Activated naive CD4-positive, alpha-beta T cell treated with anti-CD3 and anti-CD28 coated beads for 36 hours (primary cell): ENCODE measurements at regions of chr3 and their contacts with region 1.

Region 1: DNA sequence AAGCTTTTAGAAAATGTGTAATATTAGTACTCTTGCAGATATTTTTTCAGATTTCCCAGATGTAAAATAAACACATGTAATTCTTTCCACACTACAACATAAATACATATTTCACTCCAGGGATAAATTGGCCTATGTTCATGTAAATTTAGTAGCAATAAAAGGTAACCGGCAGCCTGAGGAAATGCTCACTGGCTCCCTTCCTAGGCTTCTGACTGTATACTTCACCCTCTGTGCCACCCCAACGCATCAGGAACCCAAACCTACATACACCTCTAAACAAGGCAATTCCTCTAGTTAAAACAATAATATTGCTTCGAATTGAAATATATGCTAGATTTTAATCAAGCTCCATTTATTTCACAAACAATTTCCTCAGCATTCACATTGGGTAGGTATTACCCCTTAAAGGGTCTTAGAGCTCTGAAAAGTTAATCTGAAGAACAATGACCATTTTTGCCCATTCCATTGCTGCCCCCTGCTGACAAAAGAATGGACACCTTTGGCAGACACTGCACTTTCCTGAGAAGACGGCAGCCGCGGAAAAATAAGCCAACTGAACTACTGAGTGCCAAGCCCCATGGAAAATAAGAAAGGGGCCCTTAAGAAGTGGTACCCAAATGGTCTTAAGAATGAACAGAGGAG is 212.5 kb downstream of the OSBPL10 start:
- DNase-seq: peak; percentile 84
- H3K4me3 Mint-ChIP-seq: no peak overlapping the region
- H3K27ac Mint-ChIP-seq: no peak overlapping the region
- H3K4me1 Mint-ChIP-seq: peaks cover 32% of the 10 kb centered on the region
- H3K27me3 Mint-ChIP-seq: no peaks in the 10 kb centered on the region

Region 2: GRCh38 chr3:31132132-31132769 is 636.4 kb before region 1 on chr3:
- CTCF ChIA-PET with region 1: interaction called, 4 read pairs
- intact Hi-C with region 1: loop called (anchors 2 kb)
- DNase-seq: no peak
- H3K4me3 Mint-ChIP-seq: no peak overlapping the region
- H3K27ac Mint-ChIP-seq: no peak overlapping the region
- H3K4me1 Mint-ChIP-seq: no peaks in the 10 kb centered on the region
- H3K27me3 Mint-ChIP-seq: no peaks in the 10 kb centered on the region

Region 3: GRCh38 chr3:31550452-31551251 is 217.9 kb before region 1 on chr3:
- CTCF ChIA-PET with region 1: interaction called, 3 read pairs
- intact Hi-C with region 1: loop called (anchors 1 kb)
- DNase-seq: peak; percentile 32
- H3K4me3 Mint-ChIP-seq: no peak overlapping the region
- H3K27ac Mint-ChIP-seq: peak overlapping the region; percentile 48
- H3K4me1 Mint-ChIP-seq: peaks cover 77% of the 10 kb centered on the region
- H3K27me3 Mint-ChIP-seq: no peaks in the 10 kb centered on the region

Region 4: GRCh38 chr3:31610700-31611275 is 157.8 kb before region 1 on chr3:
- CTCF ChIA-PET with region 1: no interaction called
- intact Hi-C with region 1: loop called (anchors 1 kb)
- DNase-seq: peak; percentile 31
- H3K4me3 Mint-ChIP-seq: no peak overlapping the region
- H3K27ac Mint-ChIP-seq: no peak overlapping the region
- H3K4me1 Mint-ChIP-seq: peaks cover 60% of the 10 kb centered on the region
- H3K27me3 Mint-ChIP-seq: no peaks in the 10 kb centered on the region

Region 5: GRCh38 chr3:31724661-31725060 is 43.9 kb before region 1 on chr3:
- CTCF ChIA-PET with region 1: interaction called, 3 read pairs
- intact Hi-C with region 1: loop called (anchors 2 kb)
- DNase-seq: no peak
- H3K4me3 Mint-ChIP-seq: no peak overlapping the region
- H3K27ac Mint-ChIP-seq: no peak overlapping the region
- H3K4me1 Mint-ChIP-seq: no peaks in the 10 kb centered on the region
- H3K27me3 Mint-ChIP-seq: peaks cover 5% of the 10 kb centered on the region

Region 6: GRCh38 chr3:31892916-31893573 is 124.4 kb after region 1 on chr3:
- CTCF ChIA-PET with region 1: no interaction called
- intact Hi-C with region 1: no loop called
- DNase-seq: no peak
- H3K4me3 Mint-ChIP-seq: no peak overlapping the region
- H3K27ac Mint-ChIP-seq: no peak overlapping the region
- H3K4me1 Mint-ChIP-seq: no peaks in the 10 kb centered on the region
- H3K27me3 Mint-ChIP-seq: peaks cover 11% of the 10 kb centered on the region

Region 7: DNA sequence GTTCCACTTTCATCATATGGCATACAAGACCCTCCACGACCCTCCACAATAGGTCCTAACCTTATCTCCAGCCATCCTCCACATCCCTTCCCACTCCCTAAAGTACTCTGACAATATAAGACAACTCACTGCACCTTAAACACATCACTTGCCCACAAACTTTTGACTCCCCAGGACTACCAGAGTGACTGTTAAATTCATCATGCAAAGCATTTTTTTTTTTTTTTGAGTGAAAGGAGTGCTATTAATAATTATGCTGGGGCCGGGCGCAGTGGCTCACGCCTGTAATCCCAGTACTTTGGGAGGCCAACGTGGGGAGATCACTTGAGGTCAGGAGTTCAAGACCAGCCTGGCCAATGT is 156.7 kb after region 1 on chr3:
- CTCF ChIA-PET with region 1: no interaction called
- intact Hi-C with region 1: loop called (anchors 2 kb)
- DNase-seq: peak; percentile 9
- H3K4me3 Mint-ChIP-seq: no peak overlapping the region
- H3K27ac Mint-ChIP-seq: no peak overlapping the region
- H3K4me1 Mint-ChIP-seq: peaks cover 23% of the 10 kb centered on the region
- H3K27me3 Mint-ChIP-seq: no peaks in the 10 kb centered on the region